Activated B cell treated with CpG ODN at 0.5 μM for 24 hours (primary cell): ENCODE measurements at regions of chr16 and their contacts with region 1.

Region 1: DNA sequence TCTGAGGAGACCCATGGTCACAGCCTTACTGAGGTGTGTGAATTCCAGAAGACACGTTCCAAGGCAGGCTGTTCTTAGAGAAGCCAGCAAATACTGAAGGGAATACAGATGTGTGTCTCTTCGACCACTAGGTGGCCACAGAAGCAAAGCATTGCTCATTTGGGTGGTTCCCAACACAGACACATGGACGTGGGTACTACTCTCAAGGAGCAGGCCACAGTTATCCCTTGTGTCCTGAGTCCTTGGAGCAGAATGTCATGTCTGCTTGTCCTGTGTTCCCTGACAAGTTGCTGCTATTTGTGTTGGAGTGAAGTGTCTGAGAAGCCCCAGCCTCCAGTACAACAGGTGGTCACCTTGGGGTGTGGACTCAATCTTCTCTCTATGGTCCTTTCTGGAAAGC is 30.3 kb downstream of the HMOX2 start:
- DNase-seq: peak; percentile 31
- ATAC-seq: peak; percentile 39
- H3K4me3 Mint-ChIP-seq: peak overlapping the region; percentile 29
- H3K27ac Mint-ChIP-seq: peak overlapping the region; percentile 93
- H3K4me1 Mint-ChIP-seq: peaks cover 40% of the 10 kb centered on the region
- H3K27me3 Mint-ChIP-seq: no peaks in the 10 kb centered on the region
- CTCF ChIP-seq: peak; percentile 46

Region 2: DNA sequence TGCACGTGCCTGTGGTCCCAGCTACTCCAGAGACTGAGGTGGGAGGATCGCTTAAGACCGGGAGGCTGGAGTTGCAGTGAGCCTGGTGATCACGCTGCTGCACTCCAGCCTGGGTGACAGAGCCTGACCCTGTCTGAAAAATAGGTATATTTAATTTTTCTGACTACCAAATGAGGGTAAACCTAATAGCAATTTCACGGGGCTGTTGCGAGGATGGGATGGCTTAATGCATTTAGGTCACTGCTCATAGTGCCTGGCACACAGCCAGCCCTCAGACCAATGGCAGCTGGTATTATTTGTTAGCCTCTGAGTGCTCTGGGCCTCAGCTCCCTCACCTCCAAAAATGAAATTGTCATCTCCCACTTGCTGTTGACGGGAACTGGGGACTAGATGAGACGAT is 38.0 kb after region 1 on chr16:
- CTCF ChIA-PET with region 1: interaction called, 116 read pairs
- POLR2A ChIA-PET with region 1: interaction called, 21 read pairs
- intact Hi-C with region 1: loop called (anchors 1 kb)
- DNase-seq: no peak
- ATAC-seq: no peak
- H3K4me3 Mint-ChIP-seq: no peak overlapping the region
- H3K27ac Mint-ChIP-seq: no peak overlapping the region
- H3K4me1 Mint-ChIP-seq: peaks cover 4% of the 10 kb centered on the region
- H3K27me3 Mint-ChIP-seq: peaks cover 1% of the 10 kb centered on the region
- CTCF ChIP-seq: no peak

Region 3: GRCh38 chr16:4624015-4624826 is 117.8 kb after region 1 on chr16 and contains the start of gene MGRN1:
- CTCF ChIA-PET with region 1: interaction called, 26 read pairs
- POLR2A ChIA-PET with region 1: interaction called, 14 read pairs
- intact Hi-C with region 1: loop called (anchors 1 kb)
- DNase-seq: peak; percentile 86
- ATAC-seq: peak; percentile 90
- H3K4me3 Mint-ChIP-seq: peak within 1 kb of the TSS; percentile 99
- H3K27ac Mint-ChIP-seq: peak within 1 kb of the TSS; percentile 100
- H3K4me1 Mint-ChIP-seq: peaks cover 31% of the 10 kb centered on the region
- H3K27me3 Mint-ChIP-seq: no peaks in the 10 kb centered on the region
- CTCF ChIP-seq: peak; percentile 91
- total RNA-seq, gene MGRN1: 69.6 and 88.6 TPM in 2 replicates

Region 4: DNA sequence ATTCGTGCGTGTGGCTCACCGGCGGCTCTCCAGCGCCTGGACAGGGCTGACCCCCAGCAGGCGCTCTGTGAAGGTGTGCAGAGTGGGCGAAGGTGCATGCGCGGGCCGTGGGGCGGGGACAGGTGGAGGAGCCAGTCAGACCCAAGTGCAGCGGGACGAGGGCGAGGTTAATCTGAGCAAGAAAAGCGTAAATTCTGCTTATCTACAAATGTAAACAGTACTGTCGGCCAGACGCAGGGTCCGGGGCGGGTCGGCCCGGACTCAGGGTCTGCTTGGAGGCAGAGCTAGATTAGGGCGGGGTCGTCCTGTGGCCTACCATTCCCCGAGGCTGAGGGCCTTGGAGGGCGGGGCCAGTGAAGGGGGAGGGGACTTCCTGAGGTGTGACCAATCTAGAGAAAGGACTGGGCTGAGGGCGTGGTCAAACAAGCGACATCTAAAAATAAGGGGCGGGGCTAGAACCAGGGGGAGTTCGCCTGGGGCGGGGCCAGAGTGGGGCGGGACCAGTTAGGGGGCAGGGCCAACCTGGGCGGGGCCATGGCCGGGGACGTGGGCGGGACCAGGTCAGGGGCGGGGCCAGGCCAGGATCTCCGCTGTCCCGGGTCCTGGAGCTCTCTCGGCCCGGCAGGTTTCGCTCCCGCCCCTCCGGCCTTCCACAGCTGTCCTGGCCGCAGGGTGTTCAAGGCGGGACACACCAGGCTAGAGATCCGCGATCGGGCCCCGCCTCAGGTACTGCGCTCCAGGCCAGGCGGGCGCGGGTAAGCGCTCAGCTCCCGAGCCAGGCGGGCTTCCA is 451.5 kb after region 1 on chr16 and contains the start of gene SEC14L5:
- CTCF ChIA-PET with region 1: interaction called, 3 read pairs
- POLR2A ChIA-PET with region 1: no interaction called
- intact Hi-C with region 1: loop called (anchors 2 kb)
- DNase-seq: peak; percentile 63
- ATAC-seq: peak; percentile 95
- H3K4me3 Mint-ChIP-seq: peak within 1 kb of the TSS; percentile 75
- H3K27ac Mint-ChIP-seq: no peak within 1 kb of the TSS
- H3K4me1 Mint-ChIP-seq: peaks cover 13% of the 10 kb centered on the region
- H3K27me3 Mint-ChIP-seq: peaks cover 54% of the 10 kb centered on the region
- CTCF ChIP-seq: no peak
- total RNA-seq, gene SEC14L5: not detected in 2 replicates